Naive thymus-derived CD4-positive, alpha-beta T cell (primary cell): ENCODE measurements at regions of chr10 and their contacts with region 1.

Region 1: DNA sequence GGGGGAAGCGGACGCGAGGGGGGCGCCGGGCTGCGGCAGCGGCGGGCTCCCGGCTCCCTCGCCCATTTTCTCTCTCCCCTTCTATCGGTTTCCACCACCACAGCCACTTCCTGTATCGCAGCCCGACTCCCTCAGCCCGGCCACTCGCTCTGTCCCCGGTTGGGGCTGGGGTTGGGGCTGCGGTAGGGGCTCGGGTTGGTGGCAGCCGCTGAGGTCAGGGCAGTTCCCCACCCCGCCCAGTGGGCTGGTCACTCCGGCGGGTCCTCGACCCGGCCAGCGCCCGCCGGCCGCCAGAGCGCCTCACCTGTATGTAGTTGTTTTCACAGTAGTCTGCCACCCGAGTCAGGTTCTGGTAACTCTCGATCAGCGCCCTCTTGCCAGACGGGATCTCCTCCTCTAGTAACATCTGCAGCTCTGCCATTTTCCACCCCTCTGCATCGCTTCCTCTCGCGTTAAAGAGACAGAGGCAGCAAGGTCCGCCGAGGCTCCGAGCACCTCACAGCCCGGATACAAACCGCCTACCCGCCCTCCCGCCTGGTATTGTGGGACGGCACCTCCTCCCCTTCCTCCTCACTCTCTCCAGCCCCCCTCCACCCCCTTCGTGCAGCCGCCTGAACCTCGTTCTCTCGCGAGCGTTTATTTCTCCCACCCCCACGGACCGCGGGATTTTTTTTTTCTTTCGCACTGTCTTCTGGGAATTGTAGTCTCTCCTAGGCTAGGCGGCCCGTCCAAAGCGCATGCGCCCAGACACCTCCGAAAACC is at the start of gene ABI1:
- DNase-seq: peak; percentile 94 to 100 (median 99)
- ATAC-seq: peak; percentile 94
- H3K4me3 ChIP-seq: peak within 1 kb of the TSS; percentile 80
- H3K4me3 Mint-ChIP-seq: peak within 1 kb of the TSS; percentile 88 to 100 (median 97)
- H3K27ac ChIP-seq: peak within 1 kb of the TSS; percentile 96
- H3K27ac Mint-ChIP-seq: peak within 1 kb of the TSS; percentile 95 to 100 (median 97)
- H3K4me1 ChIP-seq: peaks cover 18 to 22% of the 10 kb centered on the region in 2 donors
- H3K4me1 Mint-ChIP-seq: peaks cover 16 to 45% (median 32%) of the 10 kb centered on the region in 7 donors
- H3K27me3 ChIP-seq: no peaks in the 10 kb centered on the region
- H3K27me3 Mint-ChIP-seq: peaks cover 0 to 26% (median 0%) of the 10 kb centered on the region in 5 donors
- total RNA-seq, gene ABI1: 61.9 to 73.7 (median 65.4) TPM

Region 2: GRCh38 chr10:26437637-26438461 is 422.8 kb before region 1 on chr10 and contains the start of gene APBB1IP:
- CTCF ChIA-PET with region 1: no interaction called
- POLR2A ChIA-PET with region 1: no interaction called
- intact Hi-C with region 1: loop called (anchors 2 kb)
- DNase-seq: peak; percentile 24 to 60 (median 47)
- ATAC-seq: peak; percentile 73
- H3K4me3 ChIP-seq: peak within 1 kb of the TSS; percentile 95
- H3K4me3 Mint-ChIP-seq: peak within 1 kb of the TSS; percentile 80 to 98 (median 95)
- H3K27ac ChIP-seq: peak within 1 kb of the TSS; percentile 91
- H3K27ac Mint-ChIP-seq: peak within 1 kb of the TSS; percentile 91 to 98 (median 97)
- H3K4me1 ChIP-seq: peaks cover 16 to 35% of the 10 kb centered on the region in 2 donors
- H3K4me1 Mint-ChIP-seq: peaks cover 40 to 62% (median 57%) of the 10 kb centered on the region in 7 donors
- H3K27me3 ChIP-seq: no peaks in the 10 kb centered on the region
- H3K27me3 Mint-ChIP-seq: no peaks in the 10 kb centered on the region
- total RNA-seq, gene APBB1IP: 64.7 to 101 (median 88.0) TPM

Region 3: DNA sequence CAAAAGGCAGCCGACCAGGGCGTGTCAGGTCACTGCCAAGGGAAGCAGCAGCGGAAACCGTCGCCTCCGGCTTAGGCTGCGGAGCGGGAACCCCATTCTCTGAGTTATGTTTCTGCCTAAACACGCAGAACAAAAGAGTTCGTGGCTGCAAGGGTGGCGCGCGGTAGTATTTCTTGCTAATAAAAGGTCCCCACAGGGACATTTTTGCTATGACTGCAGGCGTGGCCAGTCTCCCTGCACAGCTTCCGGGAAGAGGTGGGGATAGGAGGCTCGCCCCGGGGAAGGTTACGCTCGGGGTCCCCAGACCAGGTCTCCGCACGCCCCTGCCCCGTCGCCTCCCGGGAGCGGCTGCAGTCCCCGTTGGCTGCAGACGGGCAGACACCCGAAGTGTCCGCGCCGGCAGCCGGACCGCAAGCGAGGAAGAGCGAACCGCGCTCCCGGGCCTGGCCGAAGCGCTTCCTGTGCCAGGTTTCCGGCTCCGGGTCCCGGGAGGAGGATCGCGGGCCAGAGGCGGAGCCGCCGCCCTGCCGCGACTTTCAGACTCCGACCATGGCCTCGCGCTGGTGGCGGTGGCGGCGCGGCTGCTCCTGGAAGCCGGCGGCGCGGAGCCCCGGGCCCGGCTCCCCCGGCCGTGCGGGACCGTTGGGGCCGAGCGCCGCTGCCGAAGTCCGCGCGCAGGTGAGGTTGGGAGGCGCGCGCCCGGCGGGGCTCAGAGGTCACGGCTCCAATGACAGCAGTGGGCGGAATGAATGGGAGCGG is 163.3 kb before region 1 on chr10 and contains the start of gene PDSS1:
- CTCF ChIA-PET with region 1: no interaction called
- POLR2A ChIA-PET with region 1: no interaction called
- intact Hi-C with region 1: loop called (anchors 1 kb)
- DNase-seq: peak; percentile 34 to 77 (median 60)
- ATAC-seq: peak; percentile 77
- H3K4me3 ChIP-seq: peak within 1 kb of the TSS; percentile 77
- H3K4me3 Mint-ChIP-seq: peak within 1 kb of the TSS; percentile 92 to 100 (median 98)
- H3K27ac ChIP-seq: peak within 1 kb of the TSS; percentile 85
- H3K27ac Mint-ChIP-seq: peak within 1 kb of the TSS; percentile 94 to 99 (median 97)
- H3K4me1 ChIP-seq: peaks cover 7 to 17% of the 10 kb centered on the region in 2 donors
- H3K4me1 Mint-ChIP-seq: peaks cover 28 to 47% (median 34%) of the 10 kb centered on the region in 7 donors
- H3K27me3 ChIP-seq: no peaks in the 10 kb centered on the region
- H3K27me3 Mint-ChIP-seq: no peaks in the 10 kb centered on the region
- total RNA-seq, gene PDSS1: 3.8 to 15.2 (median 4.7) TPM

Region 4: GRCh38 chr10:26815500-26815899 is 45.1 kb before region 1 on chr10:
- CTCF ChIA-PET with region 1: no interaction called
- POLR2A ChIA-PET with region 1: no interaction called
- intact Hi-C with region 1: loop called in 1 of 2 experiments (anchors 2 kb)
- DNase-seq: no peak
- ATAC-seq: no peak
- H3K4me3 ChIP-seq: no peak overlapping the region
- H3K4me3 Mint-ChIP-seq: no peak overlapping the region
- H3K27ac ChIP-seq: no peak overlapping the region
- H3K27ac Mint-ChIP-seq: peak overlapping the region in 2 of 9 donors; percentile 29 to 38
- H3K4me1 ChIP-seq: no peaks in the 10 kb centered on the region
- H3K4me1 Mint-ChIP-seq: peaks cover 28 to 85% (median 75%) of the 10 kb centered on the region in 7 donors
- H3K27me3 ChIP-seq: no peaks in the 10 kb centered on the region
- H3K27me3 Mint-ChIP-seq: no peaks in the 10 kb centered on the region

Region 5: GRCh38 chr10:27099916-27100812 is 239.5 kb after region 1 on chr10 and contains the start of gene ANKRD26:
- CTCF ChIA-PET with region 1: no interaction called
- POLR2A ChIA-PET with region 1: no interaction called
- intact Hi-C with region 1: loop called (anchors 1 kb)
- DNase-seq: peak; percentile 92 to 97 (median 95)
- ATAC-seq: peak; percentile 76
- H3K4me3 ChIP-seq: peak within 1 kb of the TSS; percentile 89
- H3K4me3 Mint-ChIP-seq: peak within 1 kb of the TSS; percentile 86 to 97 (median 92)
- H3K27ac ChIP-seq: peak within 1 kb of the TSS; percentile 84
- H3K27ac Mint-ChIP-seq: peak within 1 kb of the TSS; percentile 92 to 99 (median 98)
- H3K4me1 ChIP-seq: peaks cover 18 to 28% of the 10 kb centered on the region in 2 donors
- H3K4me1 Mint-ChIP-seq: peaks cover 30 to 64% (median 51%) of the 10 kb centered on the region in 7 donors
- H3K27me3 ChIP-seq: no peaks in the 10 kb centered on the region
- H3K27me3 Mint-ChIP-seq: peaks cover 0 to 2% (median 0%) of the 10 kb centered on the region in 5 donors
- total RNA-seq, gene ANKRD26: 6.4 to 14.2 (median 8.9) TPM

Region 6: DNA sequence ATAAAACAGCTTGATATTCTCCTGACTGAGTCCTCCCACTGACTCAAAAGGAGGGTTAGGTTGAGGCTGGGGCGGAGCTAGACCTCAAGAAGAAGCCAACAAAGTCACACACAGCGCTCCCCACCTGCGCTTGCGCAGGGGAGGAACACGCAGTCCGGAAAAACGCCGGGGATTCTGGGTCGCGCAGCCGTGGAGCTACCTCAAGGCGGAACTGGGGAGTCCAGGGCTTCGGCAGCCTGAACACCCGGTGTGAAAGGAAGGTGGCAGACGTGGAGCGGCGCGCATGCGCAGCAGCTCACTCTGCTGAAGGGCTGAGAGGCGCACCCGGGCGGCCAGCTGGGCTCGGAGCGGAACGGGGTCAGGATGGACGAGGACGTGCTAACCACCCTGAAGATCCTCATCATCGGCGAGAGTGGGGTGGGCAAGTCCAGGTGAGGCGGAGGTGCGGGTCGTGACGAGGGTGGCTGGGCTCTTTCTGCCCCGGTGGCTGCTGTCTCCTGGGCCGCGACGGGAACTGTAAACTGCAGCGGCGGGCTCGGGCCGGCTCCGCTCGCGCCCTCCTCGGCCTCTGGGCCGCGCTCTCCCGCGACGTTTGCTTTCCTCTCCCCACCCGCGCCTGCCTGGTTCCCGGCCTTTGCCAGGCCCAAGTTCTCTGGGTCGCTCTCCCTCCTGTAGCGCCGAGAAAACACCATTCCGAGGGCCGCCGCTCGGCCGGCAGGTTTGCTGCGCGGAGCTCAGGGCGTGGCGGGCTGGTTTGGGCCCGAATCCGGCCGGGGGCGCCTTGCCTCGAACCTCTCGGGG is 643.6 kb after region 1 on chr10 and contains the start of gene RAB18:
- CTCF ChIA-PET with region 1: no interaction called
- POLR2A ChIA-PET with region 1: no interaction called
- intact Hi-C with region 1: loop called (anchors 1 kb)
- DNase-seq: peak; percentile 93 to 99 (median 98)
- ATAC-seq: peak; percentile 97
- H3K4me3 ChIP-seq: peak within 1 kb of the TSS; percentile 82
- H3K4me3 Mint-ChIP-seq: peak within 1 kb of the TSS; percentile 95 to 100 (median 99)
- H3K27ac ChIP-seq: peak within 1 kb of the TSS; percentile 87
- H3K27ac Mint-ChIP-seq: peak within 1 kb of the TSS; percentile 96 to 99 (median 98)
- H3K4me1 ChIP-seq: peaks cover 13 to 18% of the 10 kb centered on the region in 2 donors
- H3K4me1 Mint-ChIP-seq: peaks cover 39 to 59% (median 55%) of the 10 kb centered on the region in 7 donors
- H3K27me3 ChIP-seq: no peaks in the 10 kb centered on the region
- H3K27me3 Mint-ChIP-seq: peaks cover 0 to 7% (median 0%) of the 10 kb centered on the region in 5 donors
- total RNA-seq, gene RAB18: 69.1 to 96.1 (median 73.6) TPM

Region 7: DNA sequence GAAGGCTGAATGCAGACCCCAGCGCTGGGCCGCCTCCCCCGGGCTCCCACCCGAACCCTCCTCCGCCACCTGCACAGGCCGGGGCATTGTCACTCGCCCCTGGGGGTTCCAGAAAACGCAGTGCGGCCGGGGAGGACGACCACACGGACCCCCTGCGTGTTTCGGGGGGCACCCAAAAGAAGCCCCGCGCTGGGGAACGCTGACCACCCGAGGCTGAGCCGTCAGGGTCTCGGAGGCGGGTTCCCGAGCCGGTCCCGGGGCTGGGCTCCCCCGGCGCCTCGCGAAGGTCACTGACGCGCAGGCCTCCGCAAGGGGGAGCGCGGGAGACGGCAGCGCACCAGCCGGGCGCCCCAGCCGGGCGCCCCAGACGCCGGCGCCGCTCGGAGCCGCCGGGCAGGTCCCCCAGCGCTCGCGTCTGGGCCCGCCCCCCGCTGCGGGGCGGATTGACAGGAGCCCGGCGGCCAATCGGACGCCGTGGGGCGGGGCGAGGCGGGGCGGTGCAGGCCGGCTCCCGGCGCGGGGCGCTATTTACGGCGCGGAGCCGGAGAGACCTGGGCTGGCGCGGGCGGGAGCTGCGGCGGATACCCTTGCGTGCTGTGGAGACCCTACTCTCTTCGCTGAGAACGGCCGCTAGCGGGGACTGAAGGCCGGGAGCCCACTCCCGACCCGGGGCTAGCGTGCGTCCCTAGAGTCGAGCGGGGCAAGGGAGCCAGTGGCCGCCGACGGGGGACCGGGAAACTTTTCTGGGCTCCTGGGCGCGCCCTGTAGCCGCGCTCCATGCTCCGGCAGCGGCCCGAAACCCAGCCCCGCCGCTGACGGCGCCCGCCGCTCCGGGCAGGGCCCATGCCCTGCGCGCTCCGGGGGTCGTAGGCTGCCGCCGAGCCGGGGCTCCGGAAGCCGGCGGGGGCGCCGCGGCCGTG is 1816.6 kb after region 1 on chr10 and contains the start of gene BAMBI:
- CTCF ChIA-PET with region 1: no interaction called
- POLR2A ChIA-PET with region 1: no interaction called
- intact Hi-C with region 1: loop called in 1 of 2 experiments (anchors 2 kb)
- DNase-seq: peak; percentile 86 to 95 (median 90)
- ATAC-seq: peak; percentile 97
- H3K4me3 ChIP-seq: peak within 1 kb of the TSS; percentile 57
- H3K4me3 Mint-ChIP-seq: peak within 1 kb of the TSS; percentile 79 to 94 (median 84)
- H3K27ac ChIP-seq: no peak within 1 kb of the TSS
- H3K27ac Mint-ChIP-seq: peak within 1 kb of the TSS in 3 of 9 donors; percentile 24 to 52 (median 43)
- H3K4me1 ChIP-seq: peaks cover 0 to 26% of the 10 kb centered on the region in 2 donors
- H3K4me1 Mint-ChIP-seq: peaks cover 19 to 32% (median 26%) of the 10 kb centered on the region in 7 donors
- H3K27me3 ChIP-seq: peaks cover 11 to 20% of the 10 kb centered on the region in 2 donors
- H3K27me3 Mint-ChIP-seq: peaks cover 63 to 80% (median 70%) of the 10 kb centered on the region in 5 donors
- total RNA-seq, gene BAMBI: 0.12 to 1.6 (median 0.80) TPM in 4 of 5 experiments, not detected in the other